A673 (cell line): ENCODE measurements at regions of chr1 and their contacts with region 1.

Region 1: DNA sequence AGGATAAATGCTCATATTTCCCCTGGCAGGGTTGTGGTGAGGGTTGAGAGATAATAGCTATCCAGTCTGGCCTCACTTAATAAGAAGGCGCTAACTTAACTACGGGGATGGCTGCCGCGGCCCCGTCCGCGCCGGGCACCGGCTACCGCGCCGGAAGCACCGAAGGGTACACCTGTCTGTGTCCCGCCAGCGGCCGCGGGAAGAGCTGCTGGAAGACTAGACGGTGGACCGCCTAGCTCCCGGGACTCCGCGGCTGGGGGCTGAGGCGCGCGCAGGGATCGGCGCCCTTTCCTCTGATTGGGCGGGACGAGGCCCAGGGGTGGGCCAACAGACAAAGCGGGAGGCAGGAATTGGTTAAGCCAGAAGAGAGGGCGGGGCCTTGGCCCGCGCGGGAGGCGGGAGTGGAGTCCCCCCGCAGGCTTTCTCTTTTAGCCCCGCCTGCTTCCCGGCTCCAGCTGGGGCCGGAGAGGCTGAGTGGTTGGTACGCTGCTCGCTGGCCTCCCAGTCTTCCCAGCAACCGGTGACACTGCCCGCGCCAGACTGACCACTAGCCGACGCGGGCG is at the start of gene ZNF672:
- DNase-seq: peak; percentile 99
- H3K4me3 ChIP-seq: peak within 1 kb of the TSS; percentile 94
- H3K27ac ChIP-seq: peak within 1 kb of the TSS; percentile 94
- H3K4me1 ChIP-seq: peaks cover 4% of the 10 kb centered on the region
- H3K27me3 ChIP-seq: no peaks in the 10 kb centered on the region
- CTCF ChIP-seq: no peak
- total RNA-seq, gene ZNF672: 21.6 and 24.0 TPM in 2 replicates

Region 2: GRCh38 chr1:248825909-248826760 is 11.7 kb before region 1 on chr1 and contains the start of gene SH3BP5L:
- CTCF ChIA-PET with region 1: interaction called, 8 read pairs
- POLR2A ChIA-PET with region 1: interaction called, 3 read pairs
- intact Hi-C with region 1: loop called (anchors 1 kb)
- DNase-seq: peak; percentile 98
- H3K4me3 ChIP-seq: peak within 1 kb of the TSS; percentile 72
- H3K27ac ChIP-seq: peak within 1 kb of the TSS; percentile 95
- H3K4me1 ChIP-seq: peaks cover 11% of the 10 kb centered on the region
- H3K27me3 ChIP-seq: no peaks in the 10 kb centered on the region
- CTCF ChIP-seq: peak; percentile 90
- total RNA-seq, gene SH3BP5L: 26.7 and 28.6 TPM in 2 replicates

Region 3: DNA sequence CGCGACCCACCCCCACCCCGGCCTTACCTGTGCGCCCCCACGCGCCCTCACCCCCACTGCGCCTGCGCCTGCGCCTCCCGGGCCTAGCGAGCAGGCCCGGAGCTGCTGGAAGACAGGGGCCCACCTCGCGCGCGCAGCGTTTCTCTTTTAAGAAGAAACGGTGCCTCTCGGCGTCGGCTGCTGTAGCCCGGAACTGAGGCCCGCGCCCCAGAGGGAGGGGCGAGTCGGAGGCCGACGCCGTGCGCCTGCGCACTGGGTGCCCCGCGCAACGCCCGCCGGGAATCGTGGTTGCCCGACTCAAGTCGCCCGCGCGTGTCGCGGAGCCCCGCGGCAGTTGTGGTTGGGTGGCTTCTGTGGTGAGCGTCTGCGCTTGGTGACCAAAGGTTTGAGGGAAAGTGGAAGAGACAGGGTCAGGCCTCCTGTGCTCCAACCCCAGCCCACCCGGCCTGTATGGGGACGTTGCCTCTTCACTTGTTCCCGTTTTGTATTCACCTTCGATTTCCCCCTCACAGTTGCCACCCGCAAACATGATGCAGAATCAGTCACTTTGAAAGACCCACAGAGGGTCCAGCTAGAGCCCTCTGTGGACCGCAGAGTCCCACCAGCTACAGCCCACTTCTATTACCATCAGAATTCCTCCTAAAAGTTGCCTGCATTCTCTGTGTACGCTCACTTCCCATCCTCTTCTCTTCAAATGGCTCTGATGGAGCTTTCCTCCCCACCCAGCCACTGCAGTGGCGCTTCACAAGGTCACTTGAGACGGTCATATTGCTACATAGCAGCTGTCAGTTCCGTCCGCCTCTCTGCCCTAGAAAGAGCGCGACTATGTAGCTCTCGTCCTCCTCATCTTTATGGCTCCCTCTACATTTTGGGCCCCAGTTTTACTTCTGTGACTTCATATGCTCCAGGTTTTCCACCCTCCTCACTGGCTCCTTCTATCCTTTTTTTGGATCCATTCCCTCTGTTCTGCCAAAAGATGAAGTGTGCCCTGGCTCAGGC is 21.3 kb after region 1 on chr1 and contains the start of gene ZNF692:
- CTCF ChIA-PET with region 1: interaction called, 3 read pairs
- POLR2A ChIA-PET with region 1: no interaction called
- intact Hi-C with region 1: loop called (anchors 2 kb)
- DNase-seq: peak; percentile 98
- H3K4me3 ChIP-seq: peak within 1 kb of the TSS; percentile 58
- H3K27ac ChIP-seq: peak within 1 kb of the TSS; percentile 76
- H3K4me1 ChIP-seq: peaks cover 27% of the 10 kb centered on the region
- H3K27me3 ChIP-seq: peaks cover 3% of the 10 kb centered on the region
- CTCF ChIP-seq: 0 out of 2 replicates have a peak, but pooled peaks have one; percentile 1
- total RNA-seq, gene ZNF692: 58.6 and 64.5 TPM in 2 replicates

Region 4: DNA sequence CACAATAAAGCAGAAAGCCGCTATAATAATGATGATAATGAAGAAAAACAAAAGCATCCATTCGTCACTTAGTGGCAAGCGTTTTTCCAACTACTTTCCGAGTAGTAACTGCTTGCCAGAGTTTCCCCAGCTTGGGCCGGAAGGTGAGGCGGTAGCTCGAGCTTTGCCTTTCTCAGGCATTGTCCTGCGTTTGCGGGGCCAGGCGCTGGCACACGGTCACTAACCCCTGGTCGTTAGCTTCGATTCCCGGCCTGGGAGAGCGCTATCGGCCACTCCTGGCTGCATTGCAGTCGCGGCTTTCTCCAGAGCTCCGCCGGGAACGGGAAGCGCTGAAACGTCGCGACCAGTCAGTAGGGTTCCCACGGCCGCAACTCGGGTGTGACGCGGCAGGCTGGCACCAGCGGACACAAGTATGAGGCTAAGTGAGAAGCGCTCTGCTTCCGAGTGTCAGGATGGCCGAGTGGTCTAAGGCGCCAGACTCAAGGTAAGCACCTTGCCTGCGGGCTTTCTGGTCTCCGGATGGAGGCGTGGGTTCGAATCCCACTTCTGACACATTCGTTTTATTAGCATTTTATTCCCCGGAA is 35.6 kb after region 1 on chr1:
- CTCF ChIA-PET with region 1: no interaction called
- POLR2A ChIA-PET with region 1: no interaction called
- intact Hi-C with region 1: no loop called
- DNase-seq: peak; percentile 97
- H3K4me3 ChIP-seq: peak overlapping the region; percentile 79
- H3K27ac ChIP-seq: peak overlapping the region; percentile 81
- H3K4me1 ChIP-seq: peaks cover 5% of the 10 kb centered on the region
- H3K27me3 ChIP-seq: no peaks in the 10 kb centered on the region
- CTCF ChIP-seq: no peak